ENCODE measurements at regions of chr4 and their contacts with region 1.

Region 1: DNA sequence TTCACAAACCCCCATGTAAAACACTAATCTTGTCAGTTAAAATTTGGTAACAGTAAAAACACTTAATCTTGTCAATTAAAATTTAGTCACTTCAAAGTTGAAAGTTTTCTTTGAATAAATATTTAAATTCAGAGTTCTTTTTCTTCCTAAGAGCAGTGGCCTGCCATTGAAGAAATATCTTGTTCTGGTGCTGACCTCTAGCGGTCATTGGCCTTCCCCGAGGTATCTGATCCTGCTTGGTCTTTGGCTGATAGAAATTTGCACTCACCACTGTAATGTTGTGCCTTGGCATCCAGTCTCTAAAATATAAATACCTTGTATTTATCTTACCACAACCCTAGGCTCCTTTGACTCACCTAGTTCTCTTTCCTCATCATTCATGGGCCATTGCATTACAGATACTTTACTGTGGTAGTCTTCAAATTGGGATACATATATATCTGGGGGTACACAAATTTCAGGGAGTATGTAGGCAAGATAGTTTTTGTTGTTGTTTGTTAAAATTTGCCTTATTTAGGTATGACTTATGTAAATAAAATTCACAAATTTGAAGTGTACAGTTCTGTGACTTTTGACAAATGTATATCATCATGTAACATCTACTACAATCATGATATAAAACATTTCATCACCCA is 6.7 kb upstream of the ART3 start:
- DNase-seq: peak; percentile 47 to 80 (median 58)
- ATAC-seq: peak; percentile 95
- H3K4me3 ChIP-seq: no peak overlapping the region
- H3K27ac ChIP-seq: no peak overlapping the region
- H3K4me1 ChIP-seq: no peaks in the 10 kb centered on the region
- H3K27me3 ChIP-seq: no peaks in the 10 kb centered on the region
- CTCF ChIP-seq: peak; percentile 69 to 87 (median 71)
- EP300 ChIP-seq: no peak
- POLR2A ChIP-seq: no peak
- RAD21 ChIP-seq: peak; percentile 85 to 91

Region 2: GRCh38 chr4:75895744-75896314 is 171.9 kb before region 1 on chr4:
- CTCF ChIA-PET with region 1: interaction called, 7 read pairs
- POLR2A ChIA-PET with region 1: no interaction called
- in situ Hi-C with region 1: no loop called
- intact Hi-C with region 1: loop called (anchors 5 kb)
- DNase-seq: peak; percentile 50 to 65 (median 59)
- ATAC-seq: peak; percentile 90
- H3K4me3 ChIP-seq: no peak overlapping the region
- H3K27ac ChIP-seq: no peak overlapping the region
- H3K4me1 ChIP-seq: no peaks in the 10 kb centered on the region
- H3K27me3 ChIP-seq: peaks cover 5 to 15% of the 10 kb centered on the region in 2 experiments; a peak in 4 of 5 replicates
- CTCF ChIP-seq: peak; percentile 60 to 67 (median 62)
- EP300 ChIP-seq: no peak
- POLR2A ChIP-seq: no peak
- RAD21 ChIP-seq: peak; percentile 37 to 47

Region 3: GRCh38 chr4:75916091-75916661 is 151.6 kb before region 1 on chr4:
- CTCF ChIA-PET with region 1: interaction called, 5 read pairs
- POLR2A ChIA-PET with region 1: no interaction called
- in situ Hi-C with region 1: no loop called
- intact Hi-C with region 1: loop called (anchors 5 kb)
- DNase-seq: peak; percentile 40 to 55 (median 46)
- ATAC-seq: peak; percentile 92
- H3K4me3 ChIP-seq: no peak overlapping the region
- H3K27ac ChIP-seq: no peak overlapping the region
- H3K4me1 ChIP-seq: no peaks in the 10 kb centered on the region
- H3K27me3 ChIP-seq: no peaks in the 10 kb centered on the region
- CTCF ChIP-seq: peak; percentile 71 to 85 (median 79)
- EP300 ChIP-seq: no peak
- POLR2A ChIP-seq: no peak
- RAD21 ChIP-seq: peak; percentile 54 to 76

Region 4: GRCh38 chr4:75995727-75996126 is 72.0 kb before region 1 on chr4:
- CTCF ChIA-PET with region 1: interaction called, 10 read pairs
- POLR2A ChIA-PET with region 1: no interaction called
- in situ Hi-C with region 1: loop called (anchors 5 kb)
- intact Hi-C with region 1: loop called (anchors 1 kb)
- DNase-seq: peak; percentile 36 to 60 (median 42)
- ATAC-seq: peak; percentile 53
- H3K4me3 ChIP-seq: no peak overlapping the region
- H3K27ac ChIP-seq: no peak overlapping the region
- H3K4me1 ChIP-seq: peaks cover 0 to 3% of the 10 kb centered on the region in 2 experiments; a peak in 2 of 5 replicates
- H3K27me3 ChIP-seq: no peaks in the 10 kb centered on the region
- CTCF ChIP-seq: peak; percentile 41 to 75 (median 54); a peak in 5 of 6 replicates
- EP300 ChIP-seq: no peak
- POLR2A ChIP-seq: no peak
- RAD21 ChIP-seq: peak; percentile 81

Region 5: DNA sequence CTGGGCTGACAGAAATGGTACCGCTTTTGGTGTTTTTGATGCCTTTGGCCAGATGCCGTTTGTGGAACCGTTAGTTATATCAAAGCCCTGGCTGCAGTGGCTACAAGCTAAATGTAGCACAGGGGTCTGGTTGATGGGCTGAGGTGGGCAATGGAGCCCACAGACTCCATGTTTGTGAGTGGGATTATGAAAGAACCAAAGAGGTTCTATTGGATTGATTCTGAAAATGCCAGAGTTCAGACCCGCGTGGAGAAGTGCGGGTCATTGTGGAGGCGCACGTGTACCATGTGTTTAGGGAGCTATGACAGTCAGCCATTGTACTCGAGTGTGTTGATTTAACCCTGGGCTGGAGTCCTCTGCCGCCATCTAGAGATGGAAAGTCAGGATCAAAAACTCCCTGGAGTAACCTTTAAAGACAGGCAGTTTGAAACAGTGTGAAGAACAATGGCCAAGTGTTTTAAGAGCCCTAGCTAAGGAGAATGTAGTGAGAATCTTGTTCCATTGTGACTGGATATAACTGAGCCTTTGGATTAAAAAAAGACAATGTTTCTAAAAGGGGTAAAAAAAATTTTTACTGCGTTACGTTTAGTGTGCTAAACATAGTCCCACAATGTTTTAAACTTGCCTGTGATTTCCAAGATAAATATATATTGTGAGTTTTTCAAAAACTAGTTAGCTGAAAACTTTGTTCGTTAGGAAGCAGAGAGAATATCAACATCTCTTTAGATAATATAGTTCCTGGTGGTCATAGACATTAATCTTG is 19.4 kb after region 1 on chr4:
- CTCF ChIA-PET with region 1: no interaction called
- POLR2A ChIA-PET with region 1: no interaction called
- in situ Hi-C with region 1: no loop called
- intact Hi-C with region 1: loop called (anchors 2 kb)
- DNase-seq: peak; percentile 55 to 84 (median 66)
- ATAC-seq: peak; percentile 92
- H3K4me3 ChIP-seq: no peak overlapping the region
- H3K27ac ChIP-seq: peak overlapping the region; percentile 41; the same call in 1 of the 3 replicates
- H3K4me1 ChIP-seq: peaks cover 0 to 15% of the 10 kb centered on the region in 2 experiments; a peak in 4 of 5 replicates
- H3K27me3 ChIP-seq: no peaks in the 10 kb centered on the region
- CTCF ChIP-seq: peak; percentile 79 to 88 (median 82)
- EP300 ChIP-seq: no peak
- POLR2A ChIP-seq: no peak
- RAD21 ChIP-seq: peak; percentile 76 to 82

Region 6: GRCh38 chr4:76326515-76326914 is 258.7 kb after region 1 on chr4:
- CTCF ChIA-PET with region 1: no interaction called
- POLR2A ChIA-PET with region 1: no interaction called
- in situ Hi-C with region 1: no loop called
- intact Hi-C with region 1: no loop called
- DNase-seq: no peak
- ATAC-seq: no peak
- H3K4me3 ChIP-seq: no peak overlapping the region
- H3K27ac ChIP-seq: no peak overlapping the region
- H3K4me1 ChIP-seq: no peaks in the 10 kb centered on the region
- H3K27me3 ChIP-seq: no peaks in the 10 kb centered on the region
- CTCF ChIP-seq: no peak
- EP300 ChIP-seq: no peak
- POLR2A ChIP-seq: no peak
- RAD21 ChIP-seq: 0 out of 4 replicates have a peak, but pooled peaks of 1 of the 2 experiments have one; percentile 4

Measured in K562 (cell line).